ENCODE measurements at regions of chr1 and their contacts with region 1.

Region 1: DNA sequence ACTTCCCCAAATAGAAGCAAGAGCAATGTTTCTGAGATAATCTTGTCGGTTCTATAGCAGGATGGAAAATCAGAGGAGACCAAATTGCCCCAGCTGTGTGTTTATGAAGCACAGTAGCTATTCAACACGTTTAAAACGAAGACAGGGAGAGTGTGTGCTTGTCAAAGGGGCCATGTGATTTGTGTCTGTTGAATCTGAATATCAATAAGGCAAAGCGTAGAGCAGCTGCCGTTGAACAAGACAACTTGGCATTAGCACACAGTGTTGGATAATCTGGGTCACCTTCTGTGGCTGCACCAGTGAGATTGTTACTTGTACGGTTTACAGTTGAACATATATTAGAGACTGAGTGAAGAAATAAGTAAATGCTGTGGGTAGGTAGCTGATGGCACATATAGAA is 1.0 kb downstream of the CRB1 start:
- DNase-seq: no peak
- H3K4me3 ChIP-seq: no peak overlapping the region
- H3K4me3 Mint-ChIP-seq: no peak overlapping the region
- H3K27ac ChIP-seq: no peak overlapping the region
- H3K27ac Mint-ChIP-seq: no peak overlapping the region
- H3K4me1 ChIP-seq: no peaks in the 10 kb centered on the region
- H3K4me1 Mint-ChIP-seq: no peaks in the 10 kb centered on the region
- H3K27me3 ChIP-seq: no peaks in the 10 kb centered on the region
- H3K27me3 Mint-ChIP-seq: peaks cover 0 to 2% (median 0%) of the 10 kb centered on the region in 3 donors
- CTCF ChIP-seq: no peak

Region 2: DNA sequence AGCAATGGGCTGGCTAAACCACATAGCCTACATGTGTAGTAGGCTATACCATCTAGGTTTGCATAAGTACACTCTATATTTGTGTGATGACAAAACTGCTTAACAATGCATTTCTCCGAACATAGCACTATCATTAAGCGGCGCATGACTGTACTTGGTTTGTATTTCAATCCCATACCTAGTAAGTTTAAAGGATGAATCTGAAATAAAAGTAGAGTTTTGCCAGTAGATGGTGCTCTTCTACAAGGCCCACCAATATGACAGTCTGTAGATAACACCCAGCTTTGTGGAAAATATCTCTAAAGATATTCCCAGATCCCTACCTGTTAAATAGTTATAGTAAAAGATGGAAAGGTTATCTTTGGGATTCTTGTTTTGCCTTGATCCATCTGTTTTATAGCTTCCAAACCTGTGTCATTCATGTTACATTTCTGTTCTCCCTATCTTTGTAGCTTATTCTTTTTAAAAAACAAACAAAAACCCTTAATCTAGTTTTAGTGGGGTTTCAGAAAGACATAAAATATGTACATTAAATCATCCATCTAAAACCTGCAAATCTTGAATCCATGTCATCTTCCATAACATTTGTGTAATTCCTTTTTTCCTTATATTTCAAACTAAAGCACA is 88.7 kb before region 1 on chr1:
- intact Hi-C with region 1: no loop called
- DNase-seq: peak in 2 of 3 donors; percentile 6 to 19
- H3K4me3 ChIP-seq: no peak overlapping the region
- H3K4me3 Mint-ChIP-seq: no peak overlapping the region
- H3K27ac ChIP-seq: no peak overlapping the region
- H3K27ac Mint-ChIP-seq: no peak overlapping the region
- H3K4me1 ChIP-seq: peaks cover 2 to 5% of the 10 kb centered on the region in 2 donors
- H3K4me1 Mint-ChIP-seq: peaks cover 3% of the 10 kb centered on the region
- H3K27me3 ChIP-seq: no peaks in the 10 kb centered on the region
- H3K27me3 Mint-ChIP-seq: no peaks in the 10 kb centered on the region
- CTCF ChIP-seq: peak; percentile 63

Region 3: GRCh38 chr1:197225611-197226010 is 43.4 kb before region 1 on chr1:
- intact Hi-C with region 1: loop called in 1 of 2 experiments (anchors 2 kb)
- DNase-seq: no peak
- H3K4me3 ChIP-seq: no peak overlapping the region
- H3K4me3 Mint-ChIP-seq: no peak overlapping the region
- H3K27ac ChIP-seq: no peak overlapping the region
- H3K27ac Mint-ChIP-seq: no peak overlapping the region
- H3K4me1 ChIP-seq: no peaks in the 10 kb centered on the region
- H3K4me1 Mint-ChIP-seq: no peaks in the 10 kb centered on the region
- H3K27me3 ChIP-seq: no peaks in the 10 kb centered on the region
- H3K27me3 Mint-ChIP-seq: no peaks in the 10 kb centered on the region
- CTCF ChIP-seq: no peak

Region 4: GRCh38 chr1:197302775-197303174 is 33.7 kb after region 1 on chr1:
- intact Hi-C with region 1: no loop called
- DNase-seq: no peak
- H3K4me3 ChIP-seq: no peak overlapping the region
- H3K4me3 Mint-ChIP-seq: no peak overlapping the region
- H3K27ac ChIP-seq: no peak overlapping the region
- H3K27ac Mint-ChIP-seq: no peak overlapping the region
- H3K4me1 ChIP-seq: no peaks in the 10 kb centered on the region
- H3K4me1 Mint-ChIP-seq: no peaks in the 10 kb centered on the region
- H3K27me3 ChIP-seq: no peaks in the 10 kb centered on the region
- H3K27me3 Mint-ChIP-seq: peaks cover 0 to 2% (median 0%) of the 10 kb centered on the region in 3 donors
- CTCF ChIP-seq: no peak

Measured in CD14-positive monocyte (primary cell).